Activated CD4-positive, alpha-beta memory T cell treated with anti-CD3 and anti-CD28 coated beads, Interleukin-2, amount 10 ng/mL, durations not matched to agents 7 days and 5 days (primary cell): ENCODE measurements at regions of chr3 and their contacts with region 1.

Region 1: GRCh38 chr3:197599089-197599765 is 43.5 kb upstream of the BDH1 start:
- DNase-seq: peak; percentile 82
- H3K4me3 Mint-ChIP-seq: no peak overlapping the region
- H3K27ac Mint-ChIP-seq: no peak overlapping the region
- H3K4me1 Mint-ChIP-seq: peaks cover 7% of the 10 kb centered on the region
- H3K27me3 Mint-ChIP-seq: peaks cover 3% of the 10 kb centered on the region

Region 2: GRCh38 chr3:197494366-197495058 is 104.7 kb before region 1 on chr3:
- CTCF ChIA-PET with region 1: no interaction called
- POLR2A ChIA-PET with region 1: no interaction called
- DNase-seq: no peak
- H3K4me3 Mint-ChIP-seq: no peak overlapping the region
- H3K27ac Mint-ChIP-seq: no peak overlapping the region
- H3K4me1 Mint-ChIP-seq: no peaks in the 10 kb centered on the region
- H3K27me3 Mint-ChIP-seq: peaks cover 11% of the 10 kb centered on the region

Region 3: GRCh38 chr3:197613199-197613598 is 14.0 kb after region 1 on chr3:
- CTCF ChIA-PET with region 1: interaction called, 21 read pairs
- POLR2A ChIA-PET with region 1: interaction called, 3 read pairs
- DNase-seq: peak; percentile 40
- H3K4me3 Mint-ChIP-seq: no peak overlapping the region
- H3K27ac Mint-ChIP-seq: peak overlapping the region; percentile 84
- H3K4me1 Mint-ChIP-seq: peaks cover 24% of the 10 kb centered on the region
- H3K27me3 Mint-ChIP-seq: no peaks in the 10 kb centered on the region